GM23248 (cell line): ENCODE measurements at regions of chr16 and their contacts with region 1.

Region 1: GRCh38 chr16:73196670-73197069 is 148.7 kb upstream of the ZFHX3 start:
- DNase-seq: peak; percentile 74
- H3K4me3 ChIP-seq: no peak overlapping the region
- H3K27ac ChIP-seq: no peak overlapping the region
- H3K4me1 ChIP-seq: peaks cover 19% of the 10 kb centered on the region
- H3K27me3 ChIP-seq: no peaks in the 10 kb centered on the region

Region 2: GRCh38 chr16:72474501-72475123 is 722.1 kb before region 1 on chr16:
- in situ Hi-C with region 1: loop called (anchors 25 kb)
- DNase-seq: peak; percentile 92
- H3K4me3 ChIP-seq: peak overlapping the region; percentile 11
- H3K27ac ChIP-seq: peak overlapping the region; percentile 63
- H3K4me1 ChIP-seq: peaks cover 22% of the 10 kb centered on the region
- H3K27me3 ChIP-seq: no peaks in the 10 kb centered on the region

Region 3: DNA sequence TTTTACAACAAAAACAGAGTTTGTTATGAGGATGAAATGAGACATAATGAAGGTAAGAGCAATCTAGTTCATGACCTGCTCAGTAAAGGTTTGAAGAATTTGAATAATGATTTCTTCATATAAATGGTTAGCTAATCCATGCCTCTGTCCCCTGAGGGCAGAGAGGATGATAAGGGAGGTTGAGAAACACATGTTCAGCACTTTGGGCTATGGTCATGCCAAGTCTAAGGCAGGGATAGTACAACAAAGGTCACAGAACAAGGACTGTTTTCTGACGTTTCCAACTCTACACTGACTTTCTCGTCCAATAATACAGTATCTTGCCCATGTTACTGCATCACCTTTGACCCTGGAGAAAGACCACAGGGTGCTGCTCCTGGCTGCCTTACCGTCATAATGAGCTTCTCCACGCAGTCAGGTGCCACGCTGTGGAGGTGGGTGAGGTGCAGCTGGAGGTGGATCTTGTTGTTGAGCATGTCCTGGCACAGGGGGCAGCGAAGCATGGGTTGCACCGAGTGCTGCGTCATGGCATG is 385.4 kb before region 1 on chr16:
- in situ Hi-C with region 1: no loop called
- DNase-seq: no peak
- H3K4me3 ChIP-seq: no peak overlapping the region
- H3K27ac ChIP-seq: no peak overlapping the region
- H3K4me1 ChIP-seq: no peaks in the 10 kb centered on the region
- H3K27me3 ChIP-seq: no peaks in the 10 kb centered on the region

Region 4: GRCh38 chr16:72832621-72833248 is 363.9 kb before region 1 on chr16:
- in situ Hi-C with region 1: loop called (anchors 10 kb)
- DNase-seq: peak; percentile 79
- H3K4me3 ChIP-seq: no peak overlapping the region
- H3K27ac ChIP-seq: no peak overlapping the region
- H3K4me1 ChIP-seq: peaks cover 6% of the 10 kb centered on the region; the same call in 1 of the 2 replicates
- H3K27me3 ChIP-seq: no peaks in the 10 kb centered on the region

Region 5: GRCh38 chr16:73329363-73330292 is 133.0 kb after region 1 on chr16:
- in situ Hi-C with region 1: no loop called
- DNase-seq: no peak
- H3K4me3 ChIP-seq: no peak overlapping the region
- H3K27ac ChIP-seq: no peak overlapping the region
- H3K4me1 ChIP-seq: no peaks in the 10 kb centered on the region
- H3K27me3 ChIP-seq: no peaks in the 10 kb centered on the region; the same call in 1 of the 2 replicates

Region 6: DNA sequence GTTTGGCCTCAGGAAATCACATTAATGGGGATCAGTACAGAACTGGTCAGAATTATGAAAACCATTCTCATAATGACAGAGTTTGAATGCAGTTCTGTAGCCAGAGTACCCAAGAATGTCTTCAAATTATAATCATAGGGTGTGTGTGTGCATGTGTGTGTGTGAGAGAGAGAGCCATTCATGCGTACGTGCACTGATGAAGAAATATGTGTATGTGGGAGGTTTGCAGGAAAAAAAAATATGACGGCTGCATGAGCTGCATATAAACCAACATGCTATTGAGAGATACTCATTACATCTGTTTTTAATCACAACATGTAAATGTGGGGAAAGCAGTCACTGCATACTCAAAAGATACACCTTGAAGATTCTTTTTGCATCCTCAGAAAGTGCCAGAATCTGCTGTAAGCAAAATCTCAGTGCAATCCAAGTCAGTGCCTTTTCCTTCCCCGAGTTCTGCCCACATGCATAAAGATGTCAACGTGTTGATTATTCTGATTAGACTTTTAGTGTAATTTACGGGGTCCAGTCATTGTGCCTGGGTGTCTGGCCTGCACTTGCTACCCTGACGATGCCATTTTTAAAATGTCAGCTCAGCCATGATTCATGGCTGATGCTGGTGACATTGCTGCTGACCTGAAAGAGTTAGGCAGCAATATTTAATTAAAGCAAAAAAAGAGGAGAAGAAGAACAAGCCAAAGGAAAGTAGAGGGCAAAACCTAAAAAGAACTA is 229.9 kb after region 1 on chr16:
- in situ Hi-C with region 1: no loop called
- DNase-seq: peak; percentile 13
- H3K4me3 ChIP-seq: no peak overlapping the region
- H3K27ac ChIP-seq: no peak overlapping the region
- H3K4me1 ChIP-seq: no peaks in the 10 kb centered on the region
- H3K27me3 ChIP-seq: no peaks in the 10 kb centered on the region